Caco-2 (cell line): ENCODE measurements at regions of chr17 and their contacts with region 1.

Region 1: DNA sequence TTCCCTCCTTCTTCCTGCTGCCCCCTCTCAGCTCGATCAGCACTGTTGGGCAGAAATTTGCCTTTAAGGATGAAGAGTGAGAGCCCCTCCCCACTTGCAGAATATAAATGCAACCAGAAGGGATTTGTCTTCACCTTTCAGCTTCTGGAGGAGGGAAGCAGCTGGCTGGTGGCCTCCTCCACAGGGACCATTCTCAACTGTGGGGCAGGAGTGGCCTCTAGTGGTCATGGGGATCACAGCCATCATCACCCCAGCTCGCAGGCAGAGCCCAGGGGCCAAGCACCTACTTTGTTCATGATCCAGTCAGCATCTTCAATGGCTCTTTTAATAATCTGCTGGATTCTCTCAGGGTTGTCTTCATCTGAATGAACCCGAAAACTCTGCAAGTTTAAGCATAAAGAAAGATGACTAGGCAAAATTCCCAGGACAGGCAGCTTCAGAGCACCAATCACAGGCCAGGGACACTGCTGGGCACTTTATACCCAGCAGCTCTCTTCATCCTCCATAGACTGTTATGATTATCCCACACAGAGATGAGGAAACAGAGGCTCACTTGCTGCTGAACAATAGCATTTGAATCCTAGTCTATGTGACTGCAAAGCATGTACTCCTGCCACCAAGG is 13.1 kb downstream of the LYRM9 start:
- DNase-seq: peak; percentile 89 to 95
- H3K4me3 ChIP-seq: no peak overlapping the region
- H3K4me3 Mint-ChIP-seq: no peak overlapping the region
- H3K27ac Mint-ChIP-seq: peak overlapping the region; percentile 10
- H3K4me1 ChIP-seq: no peaks in the 10 kb centered on the region
- H3K4me1 Mint-ChIP-seq: peaks cover 10% of the 10 kb centered on the region
- H3K27me3 ChIP-seq: no peaks in the 10 kb centered on the region
- H3K27me3 Mint-ChIP-seq: no peaks in the 10 kb centered on the region
- CTCF ChIP-seq: peak; percentile 99 to 100

Region 2: GRCh38 chr17:27654654-27655524 is 225.2 kb before region 1 on chr17:
- CTCF ChIA-PET with region 1: interaction called, 29 read pairs
- POLR2A ChIA-PET with region 1: interaction called, 4 read pairs
- intact Hi-C with region 1: loop called (anchors 1 kb)
- DNase-seq: peak; percentile 97 to 98
- H3K4me3 ChIP-seq: no peak overlapping the region
- H3K4me3 Mint-ChIP-seq: no peak overlapping the region
- H3K27ac Mint-ChIP-seq: no peak overlapping the region
- H3K4me1 ChIP-seq: no peaks in the 10 kb centered on the region
- H3K4me1 Mint-ChIP-seq: peaks cover 8% of the 10 kb centered on the region
- H3K27me3 ChIP-seq: no peaks in the 10 kb centered on the region
- H3K27me3 Mint-ChIP-seq: peaks cover 3% of the 10 kb centered on the region
- CTCF ChIP-seq: peak; percentile 99 to 100

Region 3: GRCh38 chr17:27793168-27793905 is 86.8 kb before region 1 on chr17:
- CTCF ChIA-PET with region 1: interaction called, 32 read pairs
- POLR2A ChIA-PET with region 1: interaction called, 4 read pairs
- intact Hi-C with region 1: loop called (anchors 2 kb)
- DNase-seq: peak; percentile 83 to 90
- H3K4me3 ChIP-seq: peak overlapping the region; percentile 56
- H3K4me3 Mint-ChIP-seq: peak overlapping the region; percentile 80
- H3K27ac Mint-ChIP-seq: peak overlapping the region; percentile 53
- H3K4me1 ChIP-seq: peaks cover 42% of the 10 kb centered on the region
- H3K4me1 Mint-ChIP-seq: peaks cover 44% of the 10 kb centered on the region
- H3K27me3 ChIP-seq: no peaks in the 10 kb centered on the region
- H3K27me3 Mint-ChIP-seq: no peaks in the 10 kb centered on the region
- CTCF ChIP-seq: no peak

Region 4: GRCh38 chr17:27845264-27846041 is 34.6 kb before region 1 on chr17:
- CTCF ChIA-PET with region 1: interaction called, 6 read pairs
- POLR2A ChIA-PET with region 1: no interaction called
- intact Hi-C with region 1: loop called (anchors 2 kb)
- DNase-seq: peak; percentile 87 to 94
- H3K4me3 ChIP-seq: no peak overlapping the region
- H3K4me3 Mint-ChIP-seq: peak overlapping the region; percentile 58
- H3K27ac Mint-ChIP-seq: peak overlapping the region; percentile 93
- H3K4me1 ChIP-seq: peaks cover 28% of the 10 kb centered on the region
- H3K4me1 Mint-ChIP-seq: peaks cover 18% of the 10 kb centered on the region
- H3K27me3 ChIP-seq: no peaks in the 10 kb centered on the region
- H3K27me3 Mint-ChIP-seq: no peaks in the 10 kb centered on the region
- CTCF ChIP-seq: no peak

Region 5: DNA sequence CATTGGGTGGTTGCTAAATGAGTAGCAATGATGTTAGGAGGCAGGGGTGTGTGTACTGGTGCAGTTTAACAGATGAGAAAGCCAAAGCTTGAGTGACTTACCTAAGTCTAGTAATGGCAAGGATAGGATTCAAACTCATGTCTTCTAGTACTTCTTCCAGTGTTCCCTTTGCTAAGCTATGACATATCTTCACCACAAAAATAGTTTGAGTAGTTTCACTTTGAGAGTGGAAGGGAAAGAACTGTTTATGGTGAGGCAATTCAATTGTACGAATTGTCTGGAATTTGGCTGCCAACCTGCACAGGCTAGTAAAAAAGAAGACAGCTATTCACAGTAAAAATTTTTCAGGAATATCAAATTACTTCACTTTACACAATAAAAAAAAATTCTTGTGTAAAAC is 300.4 kb after region 1 on chr17:
- CTCF ChIA-PET with region 1: no interaction called
- POLR2A ChIA-PET with region 1: no interaction called
- intact Hi-C with region 1: loop called (anchors 10 kb)
- DNase-seq: no peak
- H3K4me3 ChIP-seq: no peak overlapping the region
- H3K4me3 Mint-ChIP-seq: no peak overlapping the region
- H3K27ac Mint-ChIP-seq: no peak overlapping the region
- H3K4me1 ChIP-seq: no peaks in the 10 kb centered on the region
- H3K4me1 Mint-ChIP-seq: no peaks in the 10 kb centered on the region
- H3K27me3 ChIP-seq: no peaks in the 10 kb centered on the region
- H3K27me3 Mint-ChIP-seq: no peaks in the 10 kb centered on the region
- CTCF ChIP-seq: no peak